ENCODE measurements at regions of chr6 and their contacts with region 1.

Region 1: GRCh38 chr6:90296346-90297114 is at the start of gene BACH2:
- DNase-seq: peak; percentile 92
- ATAC-seq: peak; percentile 81
- H3K4me3 ChIP-seq: peak within 1 kb of the TSS; percentile 56
- H3K27ac ChIP-seq: peak within 1 kb of the TSS; percentile 13; the same call in 1 of the 2 replicates
- H3K4me1 ChIP-seq: no peaks in the 10 kb centered on the region; the same call in 1 of the 2 replicates
- H3K27me3 ChIP-seq: peaks cover 19% of the 10 kb centered on the region
- CTCF ChIP-seq: peak; percentile 32
- POLR2A ChIP-seq: peak; percentile 64
- RAD21 ChIP-seq: peak; percentile 36; the same call in 1 of the 2 replicates
- total RNA-seq, gene BACH2: 1.1 and 1.3 TPM in 2 replicates

Region 2: DNA sequence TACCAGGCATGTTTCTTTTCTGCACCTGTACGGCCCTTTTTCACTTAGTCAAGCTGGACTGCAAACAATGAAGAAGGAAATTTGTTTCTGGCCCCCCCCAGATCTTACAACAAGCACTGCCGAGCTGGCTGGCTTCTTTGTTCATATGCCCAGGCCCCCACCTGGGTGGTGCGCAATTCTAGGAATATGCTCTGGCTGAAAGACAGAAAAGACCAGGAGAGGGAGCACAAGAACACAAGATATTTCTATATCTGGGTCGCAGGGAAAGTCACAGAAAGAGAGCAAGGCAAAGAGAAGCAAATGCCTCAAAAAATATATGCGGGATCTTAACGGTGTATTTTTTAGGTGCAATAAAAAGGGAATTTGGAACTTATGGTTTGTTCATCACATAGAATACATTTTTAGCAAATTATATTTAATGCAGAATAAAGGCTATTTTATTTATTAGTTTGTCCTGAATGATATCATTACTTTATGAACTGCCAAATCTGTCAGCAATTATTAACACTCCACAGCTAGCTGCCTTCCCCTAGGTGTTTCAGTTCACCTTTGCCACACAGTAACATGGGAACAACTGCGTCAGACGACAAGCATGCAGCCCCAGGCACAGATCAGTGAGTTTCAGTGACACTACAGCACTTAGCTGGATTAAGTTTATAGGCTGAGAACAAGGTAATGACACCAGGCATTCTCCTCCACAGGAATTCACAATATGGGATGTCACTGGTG is 325.8 kb before region 1 on chr6:
- CTCF ChIA-PET with region 1: no interaction called
- POLR2A ChIA-PET with region 1: no interaction called
- dilution Hi-C with region 1: no loop called
- in situ Hi-C with region 1: no loop called
- intact Hi-C with region 1: loop called (anchors 1 kb)
- DNase-seq: peak; percentile 74
- ATAC-seq: peak; percentile 93
- H3K4me3 ChIP-seq: no peak overlapping the region
- H3K27ac ChIP-seq: no peak overlapping the region
- H3K4me1 ChIP-seq: no peaks in the 10 kb centered on the region
- H3K27me3 ChIP-seq: no peaks in the 10 kb centered on the region; the same call in 1 of the 2 replicates
- CTCF ChIP-seq: peak; percentile 79
- POLR2A ChIP-seq: no peak
- RAD21 ChIP-seq: peak; percentile 86

Region 3: DNA sequence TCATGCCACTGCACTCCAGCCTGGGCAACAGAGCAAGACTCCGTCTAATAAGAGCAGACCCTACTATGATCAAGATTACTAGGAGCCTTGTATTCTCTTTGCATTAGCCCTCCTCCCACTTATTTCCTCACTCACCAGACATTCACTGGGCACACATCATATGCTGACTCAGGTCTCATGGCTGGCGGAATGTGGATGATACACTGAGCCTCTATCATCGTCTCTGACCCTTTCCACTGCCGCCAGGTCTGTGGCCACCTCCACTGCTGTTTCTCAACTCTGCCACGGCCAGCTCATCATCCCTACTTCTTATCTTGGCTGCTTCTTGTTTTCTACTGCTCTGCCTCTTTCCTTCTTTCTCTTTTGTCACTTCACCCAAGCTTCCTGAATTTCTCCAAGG is 160.9 kb before region 1 on chr6:
- CTCF ChIA-PET with region 1: no interaction called
- POLR2A ChIA-PET with region 1: no interaction called
- dilution Hi-C with region 1: no loop called
- in situ Hi-C with region 1: no loop called
- intact Hi-C with region 1: loop called (anchors 5 kb)
- DNase-seq: peak; percentile 90
- ATAC-seq: peak; percentile 78
- H3K4me3 ChIP-seq: no peak overlapping the region
- H3K27ac ChIP-seq: peak overlapping the region; percentile 55
- H3K4me1 ChIP-seq: peaks cover 11% of the 10 kb centered on the region
- H3K27me3 ChIP-seq: no peaks in the 10 kb centered on the region
- CTCF ChIP-seq: no peak
- POLR2A ChIP-seq: peak; percentile 20; the same call in 1 of the 2 replicates
- RAD21 ChIP-seq: no peak; the same call in 1 of the 2 replicates

Region 4: DNA sequence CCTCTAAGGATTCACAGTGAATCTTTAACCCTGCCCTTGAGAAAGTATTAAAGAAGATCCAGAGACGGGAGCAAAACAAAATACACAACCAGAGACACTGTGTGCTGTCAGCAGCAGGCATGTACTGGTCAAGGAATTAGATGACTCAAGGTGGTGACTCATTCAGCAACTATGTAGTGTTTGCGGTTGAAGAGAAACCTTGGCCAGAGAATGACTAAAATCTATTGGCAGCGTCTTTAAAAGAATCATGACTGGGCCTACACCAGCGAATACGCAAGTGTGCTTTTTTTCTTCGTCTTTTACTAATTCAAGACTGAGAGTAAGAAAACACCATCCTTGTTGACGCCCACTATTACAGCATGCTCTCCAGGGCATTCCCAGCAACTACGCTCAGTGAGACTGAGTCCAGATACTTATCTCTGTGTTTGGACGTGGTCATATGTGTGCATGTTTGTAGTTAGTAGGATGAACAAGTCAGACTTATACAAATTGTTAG is 72.5 kb after region 1 on chr6:
- CTCF ChIA-PET with region 1: no interaction called
- POLR2A ChIA-PET with region 1: no interaction called
- dilution Hi-C with region 1: no loop called
- in situ Hi-C with region 1: no loop called
- intact Hi-C with region 1: loop called (anchors 2 kb)
- DNase-seq: peak; percentile 100
- ATAC-seq: peak; percentile 97
- H3K4me3 ChIP-seq: no peak overlapping the region
- H3K27ac ChIP-seq: no peak overlapping the region
- H3K4me1 ChIP-seq: peaks cover 3% of the 10 kb centered on the region
- H3K27me3 ChIP-seq: no peaks in the 10 kb centered on the region
- CTCF ChIP-seq: no peak
- POLR2A ChIP-seq: no peak
- RAD21 ChIP-seq: no peak

Region 5: GRCh38 chr6:90393232-90393884 is 96.8 kb after region 1 on chr6:
- CTCF ChIA-PET with region 1: no interaction called
- POLR2A ChIA-PET with region 1: no interaction called
- dilution Hi-C with region 1: no loop called
- in situ Hi-C with region 1: loop called (anchors 5 kb)
- intact Hi-C with region 1: loop called (anchors 2 kb)
- DNase-seq: peak; percentile 71
- ATAC-seq: peak; percentile 93
- H3K4me3 ChIP-seq: no peak overlapping the region
- H3K27ac ChIP-seq: no peak overlapping the region
- H3K4me1 ChIP-seq: no peaks in the 10 kb centered on the region
- H3K27me3 ChIP-seq: peaks cover 20% of the 10 kb centered on the region
- CTCF ChIP-seq: peak; percentile 81
- POLR2A ChIP-seq: no peak
- RAD21 ChIP-seq: peak; percentile 91

Region 6: GRCh38 chr6:90631046-90631445 is 334.5 kb after region 1 on chr6:
- CTCF ChIA-PET with region 1: no interaction called
- POLR2A ChIA-PET with region 1: no interaction called
- dilution Hi-C with region 1: no loop called
- in situ Hi-C with region 1: no loop called
- intact Hi-C with region 1: no loop called
- DNase-seq: no peak
- ATAC-seq: no peak
- H3K4me3 ChIP-seq: no peak overlapping the region
- H3K27ac ChIP-seq: no peak overlapping the region
- H3K4me1 ChIP-seq: no peaks in the 10 kb centered on the region
- H3K27me3 ChIP-seq: no peaks in the 10 kb centered on the region
- CTCF ChIP-seq: no peak
- POLR2A ChIP-seq: no peak
- RAD21 ChIP-seq: no peak

Measured in IMR-90 (cell line).